Heart right ventricle (tissue), 16 donors: ENCODE measurements at regions of chr18 and their contacts with region 1.

Region 1: GRCh38 chr18:54086046-54086802 is 138.2 kb downstream of the MBD2 start:
- DNase-seq: no peak
- ATAC-seq: no peak
- H3K4me3 ChIP-seq: no peak overlapping the region
- H3K27ac ChIP-seq: no peak overlapping the region
- H3K4me1 ChIP-seq: peaks cover 0 to 14% (median 4%) of the 10 kb centered on the region in 9 donors
- H3K27me3 ChIP-seq: no peaks in the 10 kb centered on the region
- CTCF ChIP-seq: no peak

Region 2: GRCh38 chr18:54052732-54053429 is 33.3 kb before region 1 on chr18:
- intact Hi-C with region 1: loop called in 1 of 10 experiments (anchors 1 kb)
- DNase-seq: no peak
- ATAC-seq: peak in 4 of 8 donors; percentile 41 to 79 (median 55)
- H3K4me3 ChIP-seq: no peak overlapping the region
- H3K27ac ChIP-seq: no peak overlapping the region
- H3K4me1 ChIP-seq: peaks cover 0 to 6% (median 0%) of the 10 kb centered on the region in 9 donors
- H3K27me3 ChIP-seq: no peaks in the 10 kb centered on the region
- CTCF ChIP-seq: no peak